Activated CD4-positive, alpha-beta memory T cell treated with anti-CD3 and anti-CD28 coated beads, Interleukin-2, amount 10 ng/mL, durations not matched to agents 7 days and 5 days (primary cell): ENCODE measurements at regions of chr19 and their contacts with region 1.

Region 1: DNA sequence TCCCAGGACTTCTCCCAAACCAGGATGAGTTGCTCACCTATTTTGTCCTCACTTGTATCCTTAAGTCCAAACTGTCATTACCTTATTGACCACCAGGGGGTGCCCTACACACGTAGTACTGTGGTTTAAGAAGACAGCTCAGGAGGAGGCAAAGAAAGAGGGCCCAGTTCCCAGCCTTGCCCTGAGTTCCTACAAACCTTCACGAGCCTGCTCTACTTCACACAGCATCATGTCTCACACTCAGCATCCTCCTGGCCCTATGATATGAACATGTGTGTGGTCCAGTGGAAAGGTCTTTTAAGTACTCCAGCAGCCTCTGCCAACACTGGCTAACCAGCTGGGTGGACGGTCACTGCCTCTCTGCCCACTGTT is 8.1 kb upstream of the ZNF784 start:
- DNase-seq: peak; percentile 88
- H3K4me3 Mint-ChIP-seq: peak overlapping the region; percentile 6
- H3K27ac Mint-ChIP-seq: peak overlapping the region; percentile 34
- H3K4me1 Mint-ChIP-seq: peaks cover 53% of the 10 kb centered on the region
- H3K27me3 Mint-ChIP-seq: peaks cover 7% of the 10 kb centered on the region

Region 2: DNA sequence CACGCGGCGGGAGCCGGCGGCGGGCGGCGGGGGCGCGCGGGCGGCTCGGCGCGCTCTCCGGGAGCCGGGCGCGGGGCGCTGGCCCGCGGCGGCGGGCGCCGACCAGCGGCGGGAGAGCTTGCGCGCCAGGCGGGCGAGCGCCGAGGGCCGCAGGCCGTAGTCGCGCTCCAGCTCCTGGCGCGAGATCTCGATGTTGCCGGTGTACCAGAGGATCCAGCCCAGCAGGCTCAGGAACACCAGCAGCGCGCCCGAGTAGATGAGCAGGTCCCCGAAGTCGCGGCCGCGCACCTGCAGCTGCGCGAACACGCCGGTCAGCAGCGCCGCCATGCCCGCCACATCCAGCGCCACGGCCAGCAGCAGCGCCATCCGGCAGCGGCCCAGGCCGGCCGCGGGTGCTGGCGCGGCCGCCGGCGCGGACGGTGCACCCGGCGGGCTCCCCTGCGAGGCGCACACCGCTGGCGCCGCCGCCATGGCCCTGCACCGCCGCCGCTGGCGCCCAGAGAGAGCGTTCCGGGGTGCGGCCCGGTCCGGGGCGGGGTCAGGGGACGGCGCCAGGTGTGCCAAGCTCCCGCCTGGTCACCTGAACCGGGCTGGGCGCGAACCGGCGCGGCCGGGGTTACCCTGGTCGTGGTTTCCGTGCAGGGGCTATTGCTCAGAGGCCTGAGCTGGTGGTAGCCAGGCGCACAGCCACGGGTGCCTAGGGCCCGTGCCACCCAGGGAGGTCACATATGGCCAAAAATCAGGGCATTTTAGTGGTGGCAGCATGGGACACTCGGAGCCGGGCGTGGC is 248.5 kb before region 1 on chr19 and contains the start of gene TMEM238:
- CTCF ChIA-PET with region 1: no interaction called
- POLR2A ChIA-PET with region 1: no interaction called
- DNase-seq: peak; percentile 58
- H3K4me3 Mint-ChIP-seq: peak within 1 kb of the TSS; percentile 100
- H3K27ac Mint-ChIP-seq: peak within 1 kb of the TSS; percentile 98
- H3K4me1 Mint-ChIP-seq: peaks cover 58% of the 10 kb centered on the region
- H3K27me3 Mint-ChIP-seq: no peaks in the 10 kb centered on the region
- total RNA-seq, gene TMEM238: 19.2 to 19.3 TPM

Region 3: DNA sequence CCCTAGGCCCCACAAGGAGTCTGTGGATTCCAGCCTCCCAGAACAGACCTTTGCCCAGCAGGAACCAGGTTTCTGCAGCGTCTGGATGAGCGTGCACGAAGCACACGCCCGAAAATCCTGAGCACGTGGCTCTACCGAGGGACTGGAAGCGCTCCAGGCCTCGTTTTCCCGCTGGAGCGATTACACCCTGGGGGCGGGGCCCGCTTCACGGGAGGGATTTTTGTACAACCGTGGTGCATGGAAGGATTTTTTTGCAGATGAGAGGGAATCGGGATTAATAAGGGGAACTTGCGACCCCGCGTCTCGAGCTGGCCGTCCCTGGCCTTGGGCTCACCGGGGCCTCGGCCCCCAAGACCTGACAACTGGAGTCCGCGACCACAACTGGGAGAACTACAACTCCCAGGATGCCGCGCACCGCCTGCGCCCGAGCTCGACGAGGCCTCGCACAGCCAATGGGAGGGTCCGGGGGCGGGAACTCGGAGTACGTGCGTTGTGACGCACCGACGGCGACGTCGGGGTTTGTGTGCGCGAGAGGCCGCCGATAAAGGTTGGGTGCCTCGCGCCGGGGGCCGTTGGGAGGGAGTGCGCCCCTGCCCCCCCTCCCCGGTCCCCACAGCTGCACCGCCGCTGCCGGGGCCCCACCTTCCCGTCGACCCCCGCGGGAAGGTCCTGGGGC is 156.2 kb before region 1 on chr19 and contains the start of gene ZNF628:
- CTCF ChIA-PET with region 1: interaction called, 15 read pairs
- POLR2A ChIA-PET with region 1: interaction called, 3 read pairs
- DNase-seq: peak; percentile 98
- H3K4me3 Mint-ChIP-seq: peak within 1 kb of the TSS; percentile 90
- H3K27ac Mint-ChIP-seq: peak within 1 kb of the TSS; percentile 86
- H3K4me1 Mint-ChIP-seq: peaks cover 36% of the 10 kb centered on the region
- H3K27me3 Mint-ChIP-seq: no peaks in the 10 kb centered on the region
- total RNA-seq, gene ZNF628: 6.7 to 9.1 TPM

Region 4: GRCh38 chr19:55516878-55517620 is 115.4 kb before region 1 on chr19:
- CTCF ChIA-PET with region 1: interaction called, 30 read pairs
- POLR2A ChIA-PET with region 1: interaction called, 4 read pairs
- DNase-seq: peak; percentile 90
- H3K4me3 Mint-ChIP-seq: peak overlapping the region; percentile 57
- H3K27ac Mint-ChIP-seq: peak overlapping the region; percentile 59
- H3K4me1 Mint-ChIP-seq: peaks cover 5% of the 10 kb centered on the region
- H3K27me3 Mint-ChIP-seq: peaks cover 9% of the 10 kb centered on the region

Region 5: DNA sequence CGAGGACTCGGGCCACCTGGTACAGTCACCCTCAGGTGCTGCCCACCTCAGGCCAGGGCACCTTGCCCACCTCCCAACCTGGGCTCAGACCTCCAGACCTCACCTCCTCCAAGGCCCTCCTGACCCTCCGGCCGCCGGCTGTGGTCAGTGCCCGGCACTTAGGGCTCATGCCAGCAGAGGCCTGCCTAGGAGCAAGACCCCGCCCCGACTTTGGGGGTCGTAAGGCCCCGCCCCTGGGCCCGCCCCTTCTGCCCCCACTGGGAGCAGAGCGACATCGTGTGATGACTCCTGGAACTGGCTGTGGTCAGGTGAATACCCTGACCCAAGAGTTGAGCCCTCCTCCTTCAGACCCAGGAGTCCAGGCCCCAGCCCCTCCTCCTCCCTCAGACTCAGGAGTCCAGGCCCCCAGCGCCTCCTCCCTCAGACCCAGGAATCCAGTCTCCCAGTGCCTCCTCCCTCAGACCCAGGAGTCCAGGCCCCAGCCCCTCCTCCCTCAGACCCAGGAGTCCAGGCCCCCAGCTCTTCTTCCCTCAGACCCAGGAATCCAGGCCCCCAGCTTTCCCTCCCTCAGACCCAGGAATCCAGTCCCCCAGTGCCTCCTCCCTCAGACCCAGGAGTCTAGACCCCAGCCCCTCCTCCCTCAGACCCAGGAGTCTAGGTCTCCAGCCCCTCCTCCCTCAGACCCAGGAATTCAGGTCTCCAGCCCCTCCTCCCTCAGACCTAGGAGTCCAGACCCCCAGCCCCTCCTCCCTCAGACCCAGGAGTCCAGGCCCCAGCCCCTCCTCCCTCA is 95.3 kb before region 1 on chr19 and contains the start of gene SBK2:
- CTCF ChIA-PET with region 1: no interaction called
- POLR2A ChIA-PET with region 1: no interaction called
- DNase-seq: no peak
- H3K4me3 Mint-ChIP-seq: no peak within 1 kb of the TSS
- H3K27ac Mint-ChIP-seq: no peak within 1 kb of the TSS
- H3K4me1 Mint-ChIP-seq: no peaks in the 10 kb centered on the region
- H3K27me3 Mint-ChIP-seq: no peaks in the 10 kb centered on the region
- total RNA-seq, gene SBK2: not detected

Region 6: GRCh38 chr19:55590622-55591021 is 41.8 kb before region 1 on chr19:
- CTCF ChIA-PET with region 1: no interaction called
- POLR2A ChIA-PET with region 1: no interaction called
- DNase-seq: no peak
- H3K4me3 Mint-ChIP-seq: no peak overlapping the region
- H3K27ac Mint-ChIP-seq: no peak overlapping the region
- H3K4me1 Mint-ChIP-seq: peaks cover 9% of the 10 kb centered on the region
- H3K27me3 Mint-ChIP-seq: peaks cover 12% of the 10 kb centered on the region

Region 7: DNA sequence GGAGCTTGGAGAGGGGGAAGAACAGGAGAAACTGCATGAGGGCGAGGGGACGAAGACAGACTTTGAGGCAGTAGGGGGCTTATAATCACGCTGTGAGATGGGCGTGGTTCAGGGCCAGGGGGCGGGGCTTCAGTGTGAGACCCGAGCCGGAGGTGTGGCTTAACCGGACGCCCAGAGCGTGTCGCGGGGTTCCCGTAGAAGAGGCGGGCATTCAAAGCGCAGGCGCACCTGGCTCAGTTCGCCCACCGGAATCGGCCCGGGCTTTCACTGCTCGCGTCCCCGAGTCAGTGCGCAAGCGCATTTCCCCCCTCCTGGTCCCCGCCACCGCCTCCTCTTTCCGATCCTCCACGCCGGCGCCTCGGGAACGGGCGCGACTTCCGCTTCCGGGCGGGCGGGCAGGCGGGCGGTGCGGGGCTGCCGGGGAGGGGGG is 27.2 kb before region 1 on chr19:
- CTCF ChIA-PET with region 1: interaction called, 56 read pairs
- POLR2A ChIA-PET with region 1: interaction called, 53 read pairs
- DNase-seq: peak; percentile 99
- H3K4me3 Mint-ChIP-seq: peak overlapping the region; percentile 76
- H3K27ac Mint-ChIP-seq: peak overlapping the region; percentile 95
- H3K4me1 Mint-ChIP-seq: peaks cover 53% of the 10 kb centered on the region
- H3K27me3 Mint-ChIP-seq: no peaks in the 10 kb centered on the region

Region 8: DNA sequence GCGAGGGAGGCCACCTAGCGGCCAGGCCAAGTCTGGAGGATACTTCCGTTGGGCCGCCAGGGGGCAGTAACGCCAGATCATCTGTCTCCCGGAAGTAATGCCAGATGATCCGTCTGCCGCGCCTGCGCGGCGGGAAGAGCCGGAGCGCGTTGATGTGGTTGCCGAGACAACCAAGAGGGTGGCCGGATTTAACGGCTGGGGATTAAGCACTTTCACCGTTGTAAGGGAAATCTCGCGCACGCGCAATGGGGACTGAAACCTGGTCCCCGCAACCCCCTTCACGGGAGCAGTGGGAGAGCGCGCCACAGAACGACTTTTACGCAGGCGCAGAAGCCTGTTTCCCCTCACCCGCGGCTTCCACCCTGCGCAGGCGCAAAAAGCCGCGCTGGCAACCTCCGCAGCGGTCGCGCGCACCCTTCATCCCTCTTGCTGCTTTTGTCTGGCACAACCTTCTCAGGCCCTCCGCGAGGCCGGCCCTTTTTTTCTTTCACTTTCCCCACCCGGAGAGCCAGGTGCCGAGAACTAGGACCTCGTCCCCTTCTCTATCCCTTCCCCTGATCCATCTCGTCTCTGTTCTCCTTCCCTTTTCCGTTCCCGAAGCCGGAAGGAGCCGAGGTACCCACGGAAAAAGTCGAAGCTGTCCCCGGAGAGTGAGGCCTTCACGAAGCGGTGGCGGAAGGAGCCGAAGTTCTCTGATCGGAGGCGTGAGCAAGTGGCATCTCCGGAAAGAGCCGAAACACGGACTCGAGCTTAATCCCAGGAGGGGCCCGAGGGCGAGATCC is 21.5 kb after region 1 on chr19:
- CTCF ChIA-PET with region 1: interaction called, 25 read pairs
- POLR2A ChIA-PET with region 1: interaction called, 6 read pairs
- DNase-seq: peak; percentile 100
- H3K4me3 Mint-ChIP-seq: peak overlapping the region; percentile 83
- H3K27ac Mint-ChIP-seq: peak overlapping the region; percentile 94
- H3K4me1 Mint-ChIP-seq: peaks cover 39% of the 10 kb centered on the region
- H3K27me3 Mint-ChIP-seq: no peaks in the 10 kb centered on the region

Region 9: DNA sequence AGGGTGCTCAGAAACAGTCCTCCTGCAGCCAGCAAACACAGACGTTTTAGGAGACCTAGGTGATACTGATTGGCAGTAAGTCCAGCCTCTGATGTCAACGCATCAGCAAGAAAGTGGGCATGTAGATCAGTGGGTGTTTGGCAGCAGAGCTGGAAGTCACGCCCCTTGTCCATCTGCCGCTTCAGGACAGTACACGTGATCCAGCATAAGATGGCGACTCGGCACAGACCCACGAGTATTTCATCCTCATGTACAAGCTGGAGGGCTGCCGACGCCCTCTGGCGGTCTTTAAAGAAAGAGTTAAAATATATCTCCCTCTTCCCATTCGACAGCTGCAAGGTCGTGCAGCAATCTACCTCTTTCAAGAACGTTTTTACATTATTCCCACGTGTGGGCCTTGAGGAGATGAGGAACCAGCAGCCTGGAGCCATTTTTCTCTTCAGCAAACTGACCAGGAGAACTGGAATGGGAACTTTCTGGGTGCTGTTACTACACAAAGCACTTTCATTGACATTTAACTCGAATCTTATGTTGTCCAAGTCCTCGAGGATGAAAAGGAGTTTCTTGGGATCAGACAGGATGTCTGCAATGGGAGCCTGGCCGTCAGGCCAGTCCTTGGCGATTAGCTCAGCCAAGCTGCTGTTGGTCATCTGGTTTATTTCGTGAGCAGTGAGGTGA is 177.1 kb after region 1 on chr19:
- CTCF ChIA-PET with region 1: interaction called, 23 read pairs
- POLR2A ChIA-PET with region 1: no interaction called
- DNase-seq: peak; percentile 32
- H3K4me3 Mint-ChIP-seq: no peak overlapping the region
- H3K27ac Mint-ChIP-seq: no peak overlapping the region
- H3K4me1 Mint-ChIP-seq: no peaks in the 10 kb centered on the region
- H3K27me3 Mint-ChIP-seq: no peaks in the 10 kb centered on the region